Activated CD8-positive, alpha-beta T cell treated with anti-CD3 and anti-CD28 coated beads for 36 hours (primary cell): ENCODE measurements at regions of chr13 and their contacts with region 1.

Region 1: GRCh38 chr13:97109841-97110492 is 112.2 kb upstream of the MBNL2 start:
- DNase-seq: peak; percentile 77
- ATAC-seq: peak; percentile 97
- H3K4me3 Mint-ChIP-seq: no peak overlapping the region
- H3K27ac Mint-ChIP-seq: no peak overlapping the region
- H3K4me1 Mint-ChIP-seq: peaks cover 11% of the 10 kb centered on the region
- H3K27me3 Mint-ChIP-seq: peaks cover 12% of the 10 kb centered on the region
- CTCF ChIP-seq: peak; percentile 95

Region 2: GRCh38 chr13:96388598-96388997 is 721.4 kb before region 1 on chr13:
- CTCF ChIA-PET with region 1: no interaction called
- POLR2A ChIA-PET with region 1: no interaction called
- intact Hi-C with region 1: no loop called
- DNase-seq: no peak
- ATAC-seq: no peak
- H3K4me3 Mint-ChIP-seq: no peak overlapping the region
- H3K27ac Mint-ChIP-seq: no peak overlapping the region
- H3K4me1 Mint-ChIP-seq: no peaks in the 10 kb centered on the region
- H3K27me3 Mint-ChIP-seq: no peaks in the 10 kb centered on the region
- CTCF ChIP-seq: no peak

Region 3: DNA sequence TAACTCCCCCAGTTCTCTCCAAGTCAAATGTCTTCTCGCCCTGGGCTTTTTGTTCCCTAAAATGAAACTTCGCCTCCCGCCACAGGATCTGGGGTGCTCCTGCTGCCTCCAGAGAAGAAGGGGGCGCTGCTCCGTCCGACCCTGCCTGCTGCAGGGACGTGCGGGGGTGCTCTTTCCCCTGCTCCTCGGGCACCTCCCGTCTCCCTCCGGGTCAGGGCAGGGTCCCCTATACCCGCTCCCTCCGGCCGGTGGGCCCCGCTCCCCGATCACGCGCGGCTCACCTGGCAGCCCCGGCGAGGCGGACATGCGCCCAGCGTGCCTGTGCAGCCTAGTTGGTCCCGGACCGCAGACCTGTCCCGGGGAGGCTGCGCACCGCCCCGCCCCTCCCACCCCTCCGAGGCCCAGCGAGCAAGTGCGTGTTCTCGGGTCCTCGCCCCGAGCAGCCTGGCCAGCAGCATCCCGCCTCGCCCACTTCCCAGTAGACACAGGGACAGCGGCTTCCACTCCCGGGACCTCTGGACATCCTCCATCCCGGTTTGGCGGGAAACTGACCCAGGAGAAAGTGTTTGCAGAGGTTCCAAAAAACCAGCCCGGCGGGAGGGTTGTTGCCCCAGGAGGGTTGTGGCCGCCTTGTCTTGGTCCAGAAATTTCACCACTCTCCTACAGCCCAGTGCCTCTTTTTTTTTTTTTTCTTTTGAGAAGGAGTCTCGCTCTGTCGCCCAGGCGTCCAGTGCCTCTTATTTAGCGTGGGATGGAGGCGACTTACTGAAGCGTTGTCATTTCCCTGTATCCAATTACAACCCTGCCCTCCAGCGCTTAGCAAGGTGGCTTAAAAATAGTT is 115.7 kb before region 1 on chr13 and contains the start of gene OXGR1:
- CTCF ChIA-PET with region 1: no interaction called
- POLR2A ChIA-PET with region 1: no interaction called
- intact Hi-C with region 1: no loop called
- DNase-seq: no peak
- ATAC-seq: no peak
- H3K4me3 Mint-ChIP-seq: no peak within 1 kb of the TSS
- H3K27ac Mint-ChIP-seq: no peak within 1 kb of the TSS
- H3K4me1 Mint-ChIP-seq: peaks cover 2% of the 10 kb centered on the region
- H3K27me3 Mint-ChIP-seq: peaks cover 30% of the 10 kb centered on the region
- CTCF ChIP-seq: no peak
- total RNA-seq, gene OXGR1: not detected

Region 4: GRCh38 chr13:97124916-97125809 is 15.2 kb after region 1 on chr13:
- CTCF ChIA-PET with region 1: interaction called, 25 read pairs
- POLR2A ChIA-PET with region 1: no interaction called
- intact Hi-C with region 1: no loop called
- DNase-seq: peak; percentile 16
- ATAC-seq: peak; percentile 29
- H3K4me3 Mint-ChIP-seq: no peak overlapping the region
- H3K27ac Mint-ChIP-seq: no peak overlapping the region
- H3K4me1 Mint-ChIP-seq: peaks cover 21% of the 10 kb centered on the region
- H3K27me3 Mint-ChIP-seq: peaks cover 26% of the 10 kb centered on the region
- CTCF ChIP-seq: no peak

Region 5: GRCh38 chr13:97141564-97142005 is 31.6 kb after region 1 on chr13:
- CTCF ChIA-PET with region 1: interaction called, 14 read pairs
- POLR2A ChIA-PET with region 1: no interaction called
- intact Hi-C with region 1: no loop called
- DNase-seq: peak; percentile 30
- ATAC-seq: peak; percentile 93
- H3K4me3 Mint-ChIP-seq: no peak overlapping the region
- H3K27ac Mint-ChIP-seq: no peak overlapping the region
- H3K4me1 Mint-ChIP-seq: peaks cover 10% of the 10 kb centered on the region
- H3K27me3 Mint-ChIP-seq: peaks cover 12% of the 10 kb centered on the region
- CTCF ChIP-seq: no peak

Region 6: GRCh38 chr13:97205982-97206381 is 96.0 kb after region 1 on chr13:
- CTCF ChIA-PET with region 1: interaction called, 15 read pairs
- POLR2A ChIA-PET with region 1: no interaction called
- intact Hi-C with region 1: no loop called
- DNase-seq: no peak
- ATAC-seq: peak; percentile 61
- H3K4me3 Mint-ChIP-seq: no peak overlapping the region
- H3K27ac Mint-ChIP-seq: no peak overlapping the region
- H3K4me1 Mint-ChIP-seq: peaks cover 15% of the 10 kb centered on the region
- H3K27me3 Mint-ChIP-seq: no peaks in the 10 kb centered on the region
- CTCF ChIP-seq: no peak

Region 7: GRCh38 chr13:97221989-97222700 is 112.2 kb after region 1 on chr13 and contains the start of gene MBNL2:
- CTCF ChIA-PET with region 1: interaction called, 37 read pairs
- POLR2A ChIA-PET with region 1: interaction called, 3 read pairs
- intact Hi-C with region 1: no loop called
- DNase-seq: peak; percentile 92
- ATAC-seq: peak; percentile 95
- H3K4me3 Mint-ChIP-seq: peak within 1 kb of the TSS; percentile 79
- H3K27ac Mint-ChIP-seq: peak within 1 kb of the TSS; percentile 92
- H3K4me1 Mint-ChIP-seq: peaks cover 29% of the 10 kb centered on the region
- H3K27me3 Mint-ChIP-seq: no peaks in the 10 kb centered on the region
- CTCF ChIP-seq: no peak
- total RNA-seq, gene MBNL2: 15.8 to 16.1 TPM

Region 8: DNA sequence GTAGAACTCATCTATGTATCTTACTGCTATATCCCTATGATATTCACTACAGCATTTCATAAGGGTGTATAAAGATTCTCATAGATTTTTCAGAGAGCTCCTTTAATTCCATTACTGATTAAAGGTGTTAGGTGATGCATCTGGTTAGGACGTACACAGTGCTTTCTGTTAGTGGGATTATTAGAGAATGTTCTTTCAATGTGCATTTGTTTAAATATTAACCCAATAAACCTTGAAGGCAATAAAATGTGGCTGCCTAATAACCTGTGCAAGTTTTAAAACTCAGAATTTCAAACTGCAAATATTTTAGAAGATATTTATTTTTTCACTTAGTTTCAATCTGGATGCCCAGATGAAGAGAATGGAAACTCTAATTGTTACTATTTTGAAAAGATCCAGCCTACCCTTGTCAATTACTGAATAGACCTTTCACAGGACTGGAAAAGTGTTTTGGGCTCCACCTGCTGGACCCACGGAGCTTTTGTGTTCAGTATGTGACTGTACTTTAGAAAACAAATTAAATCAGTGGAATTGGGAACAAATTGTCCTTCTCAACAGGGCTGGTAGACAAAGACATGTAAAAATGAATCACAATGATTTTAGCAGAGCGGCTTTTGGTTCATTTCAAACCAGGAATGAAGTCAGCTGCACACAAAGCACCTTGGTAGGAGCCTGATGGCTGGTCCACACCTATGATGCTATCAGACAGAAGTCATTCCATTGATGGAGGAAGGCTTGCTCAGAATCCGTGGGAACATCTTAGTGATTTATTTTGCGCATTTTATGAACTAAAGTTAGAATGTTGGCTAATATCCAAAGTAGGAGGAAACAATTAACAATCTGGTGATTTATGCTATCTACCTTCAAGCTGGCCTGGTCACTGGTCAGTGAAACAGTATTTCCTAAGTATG is 234.6 kb after region 1 on chr13:
- CTCF ChIA-PET with region 1: interaction called, 109 read pairs
- POLR2A ChIA-PET with region 1: no interaction called
- intact Hi-C with region 1: loop called (anchors 5 kb)
- DNase-seq: peak; percentile 73
- ATAC-seq: peak; percentile 71
- H3K4me3 Mint-ChIP-seq: no peak overlapping the region
- H3K27ac Mint-ChIP-seq: no peak overlapping the region
- H3K4me1 Mint-ChIP-seq: peaks cover 8% of the 10 kb centered on the region
- H3K27me3 Mint-ChIP-seq: no peaks in the 10 kb centered on the region
- CTCF ChIP-seq: peak; percentile 70

Region 9: DNA sequence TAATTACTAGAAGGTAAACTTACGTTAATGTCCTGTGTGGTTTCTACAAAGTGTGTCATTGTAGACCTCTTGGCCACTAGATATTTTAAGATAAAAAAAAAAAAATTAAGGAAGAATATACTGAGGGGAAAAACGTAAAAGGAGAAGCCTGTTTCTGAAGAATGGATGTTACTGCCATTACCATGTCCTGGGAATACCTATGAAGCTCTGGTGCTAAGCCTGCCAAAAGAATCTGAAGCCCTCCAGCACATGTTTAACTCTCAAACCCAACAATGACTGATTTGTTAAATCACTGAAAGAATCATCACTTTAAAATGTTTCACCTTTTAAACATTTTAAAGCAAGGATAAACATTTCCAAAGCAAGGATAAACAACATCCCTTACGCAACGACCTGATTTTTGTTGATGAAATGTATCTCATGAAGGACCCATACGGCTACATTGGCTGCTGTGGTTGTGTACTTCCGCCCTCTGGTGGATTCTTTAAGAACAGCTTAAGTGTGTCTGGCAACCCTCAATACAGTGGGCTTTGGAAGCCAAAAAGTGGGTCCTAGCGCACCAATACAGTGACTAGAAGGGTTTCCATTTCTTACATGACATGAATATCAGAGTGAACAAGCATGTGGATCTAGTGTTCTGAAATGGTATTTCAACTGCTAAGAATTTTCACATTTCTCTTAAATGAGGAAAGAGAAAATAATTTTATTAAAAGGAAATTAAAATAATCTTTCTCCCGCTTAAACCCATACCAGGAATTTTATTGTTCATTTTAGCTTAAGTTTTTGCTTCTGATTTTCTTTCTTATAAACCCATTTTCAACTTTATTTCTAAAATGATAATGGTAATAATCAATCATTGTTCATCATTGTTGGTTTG is 249.5 kb after region 1 on chr13:
- CTCF ChIA-PET with region 1: interaction called, 245 read pairs
- POLR2A ChIA-PET with region 1: no interaction called
- intact Hi-C with region 1: loop called (anchors 1 kb)
- DNase-seq: peak; percentile 63
- ATAC-seq: peak; percentile 97
- H3K4me3 Mint-ChIP-seq: no peak overlapping the region
- H3K27ac Mint-ChIP-seq: no peak overlapping the region
- H3K4me1 Mint-ChIP-seq: no peaks in the 10 kb centered on the region
- H3K27me3 Mint-ChIP-seq: no peaks in the 10 kb centered on the region
- CTCF ChIP-seq: peak; percentile 72